AG04449 (cell line): ENCODE measurements at regions of chr10 and their contacts with region 1.

Region 1: DNA sequence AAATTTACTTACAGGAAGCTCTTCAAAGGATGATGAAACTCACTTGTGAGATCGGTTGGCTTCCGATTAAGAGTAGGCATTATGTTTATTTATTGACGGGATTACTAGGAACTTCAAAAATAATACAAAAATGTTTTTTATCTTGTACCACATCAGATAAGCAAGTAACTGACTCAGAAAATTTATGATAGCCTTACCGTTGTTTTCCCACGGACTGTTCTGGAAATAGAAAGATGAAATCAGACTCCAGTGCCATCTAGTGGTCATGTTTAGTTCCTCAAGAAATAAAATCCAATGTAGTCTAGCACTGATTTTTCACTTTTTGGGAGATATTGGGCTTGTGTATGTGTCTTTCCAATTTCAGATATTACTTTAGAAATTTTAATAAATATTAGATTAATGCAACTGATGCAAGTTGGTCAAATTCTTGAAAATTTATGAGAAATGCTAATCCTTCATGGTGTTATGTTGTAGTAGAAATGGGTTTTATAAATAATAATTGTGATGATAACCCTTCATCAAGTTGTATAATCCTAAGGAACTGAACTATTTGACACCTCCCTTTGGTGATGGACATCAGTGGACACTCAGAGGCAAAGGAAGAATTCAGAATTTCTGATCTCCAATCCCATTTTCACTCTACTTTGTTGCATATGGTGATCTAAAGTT is 168.8 kb downstream of the TMEM26 start:
- DNase-seq: peak; percentile 7
- H3K4me3 ChIP-seq: no peak overlapping the region
- CTCF ChIP-seq: peak; percentile 47

Region 2: DNA sequence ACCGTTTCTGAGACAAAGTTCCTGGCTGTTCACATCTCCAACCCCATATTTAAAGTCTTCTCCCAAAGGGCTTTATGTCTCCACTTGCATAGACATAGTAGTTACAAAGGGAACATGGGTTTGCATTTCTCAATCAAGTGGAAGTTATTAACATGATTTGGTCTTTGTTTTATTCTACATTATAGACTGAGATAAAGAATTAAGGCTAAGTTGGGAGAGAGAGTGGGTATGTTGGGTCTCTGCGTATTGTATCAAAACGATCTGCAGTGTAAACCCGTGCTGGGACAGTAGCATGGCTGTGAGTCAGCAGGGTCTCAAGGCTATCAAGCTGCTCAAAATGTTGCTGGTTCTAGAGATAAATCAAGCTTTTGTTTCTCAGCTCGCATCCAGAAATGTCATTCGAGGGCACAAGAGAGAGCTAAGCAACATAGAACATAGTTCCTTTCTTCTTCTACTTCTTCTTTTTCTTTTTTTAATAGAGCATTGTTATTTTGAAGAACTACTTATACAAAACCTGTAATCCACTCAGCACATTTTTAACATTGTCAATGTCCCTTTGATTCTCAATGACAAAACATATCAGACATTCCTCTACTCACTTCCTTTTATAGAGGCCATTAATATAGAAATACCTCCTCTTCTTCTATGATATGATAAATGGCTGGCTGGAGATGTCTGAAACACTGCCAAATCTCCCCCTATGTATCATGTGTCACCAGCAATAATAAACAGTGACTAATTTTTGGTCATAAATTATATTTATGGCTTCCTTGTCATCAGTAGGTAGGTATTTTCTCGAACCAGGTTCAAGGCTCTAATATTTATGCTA is 305.9 kb before region 1 on chr10:
- CTCF ChIA-PET with region 1: no interaction called
- POLR2A ChIA-PET with region 1: no interaction called
- DNase-seq: no peak
- H3K4me3 ChIP-seq: no peak overlapping the region
- CTCF ChIP-seq: no peak

Region 3: DNA sequence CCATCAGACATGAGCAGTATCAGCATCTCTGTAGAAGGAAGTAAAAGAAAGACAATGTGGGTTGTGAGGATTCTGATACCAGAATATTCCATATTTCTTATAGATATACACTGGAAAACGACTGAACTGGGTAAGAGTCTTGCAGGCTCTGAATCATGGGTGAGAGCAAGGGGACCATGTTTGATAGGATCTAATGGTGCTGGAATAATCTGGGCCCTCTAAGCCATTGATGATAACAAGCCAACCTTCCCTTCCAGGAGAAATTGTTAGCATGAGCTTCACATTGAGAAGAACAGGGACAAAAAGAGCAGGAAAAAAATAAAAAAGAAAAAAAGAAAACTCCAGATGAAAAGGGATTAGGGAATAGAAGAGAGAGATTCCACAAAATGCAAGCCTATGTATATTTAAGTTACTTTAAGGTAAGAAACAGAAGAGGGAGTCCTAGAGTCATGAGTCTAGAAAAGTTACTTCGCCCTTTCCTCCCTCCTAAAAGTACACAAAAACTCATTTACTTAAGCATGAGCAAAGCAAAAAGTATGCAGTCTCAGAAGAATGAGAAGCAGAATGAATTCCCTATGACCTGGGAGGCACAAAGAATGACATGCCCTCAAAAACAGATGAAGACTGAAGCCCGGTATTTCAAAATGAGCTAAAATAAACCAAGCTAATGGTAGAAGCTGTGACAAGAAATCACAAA is 13.1 kb before region 1 on chr10:
- CTCF ChIA-PET with region 1: interaction called, 16 read pairs
- POLR2A ChIA-PET with region 1: no interaction called
- DNase-seq: peak; percentile 66
- H3K4me3 ChIP-seq: no peak overlapping the region
- CTCF ChIP-seq: peak; percentile 16

Region 4: GRCh38 chr10:61299841-61300240 is 15.5 kb after region 1 on chr10:
- CTCF ChIA-PET with region 1: no interaction called
- POLR2A ChIA-PET with region 1: no interaction called
- DNase-seq: no peak
- H3K4me3 ChIP-seq: no peak overlapping the region
- CTCF ChIP-seq: no peak